ENCODE measurements at regions of chr19 and their contacts with region 1.

Region 1: GRCh38 chr19:42283143-42284065 is 14.4 kb downstream of the CIC start:
- DNase-seq: peak; percentile 93 to 97 (median 95)
- ATAC-seq: peak; percentile 83
- H3K4me3 ChIP-seq: peak overlapping the region; percentile 50
- H3K4me3 Mint-ChIP-seq: peak overlapping the region in 1 of 10 donors; percentile 0
- H3K27ac ChIP-seq: peak overlapping the region; percentile 83
- H3K27ac Mint-ChIP-seq: no peak overlapping the region
- H3K4me1 ChIP-seq: peaks cover 42 to 45% of the 10 kb centered on the region in 2 donors
- H3K4me1 Mint-ChIP-seq: peaks cover 22 to 44% (median 32%) of the 10 kb centered on the region in 7 donors
- H3K27me3 ChIP-seq: no peaks in the 10 kb centered on the region
- H3K27me3 Mint-ChIP-seq: no peaks in the 10 kb centered on the region

Region 2: DNA sequence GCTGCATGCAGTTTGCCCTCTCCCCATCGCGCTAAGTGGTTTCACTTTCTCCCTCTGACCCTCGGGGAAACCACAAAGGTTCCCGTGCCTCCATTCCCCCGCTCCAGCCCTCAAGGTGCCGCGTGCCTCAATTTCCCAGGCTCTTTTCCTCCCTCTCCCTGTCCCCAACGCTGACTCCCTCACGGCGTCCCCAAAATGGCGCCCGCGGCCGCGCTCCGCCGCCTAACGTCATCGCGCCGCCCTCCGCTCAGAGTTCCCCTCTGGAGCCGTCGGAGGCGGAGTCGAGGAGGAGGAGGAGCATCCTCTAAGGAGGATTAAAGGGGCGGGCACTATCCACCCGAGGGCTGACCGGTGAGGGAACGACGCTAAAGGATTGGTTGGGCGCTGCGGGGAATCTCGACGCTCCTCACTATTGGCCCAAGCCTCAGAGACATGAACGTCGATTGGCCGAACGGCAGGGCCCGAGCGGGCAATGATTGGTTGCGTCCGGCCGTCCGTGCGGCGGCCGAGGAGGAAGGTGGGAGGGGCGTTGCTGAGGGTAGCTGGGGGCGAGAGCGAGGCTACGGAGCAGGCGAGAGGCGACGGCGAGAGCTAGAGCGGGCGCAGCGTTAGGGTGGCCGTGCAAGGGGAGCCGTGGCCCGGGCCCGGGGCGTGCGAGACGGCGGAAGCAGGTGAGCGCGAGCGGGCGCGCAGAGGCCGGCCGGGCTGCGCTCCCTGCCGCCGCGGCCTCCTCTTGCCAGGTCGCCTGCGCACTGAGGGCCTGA is 207.6 kb before region 1 on chr19 and contains the start of gene ZNF574:
- CTCF ChIA-PET with region 1: no interaction called
- POLR2A ChIA-PET with region 1: no interaction called
- intact Hi-C with region 1: loop called in 1 of 2 experiments (anchors 2 kb)
- DNase-seq: peak; percentile 91 to 99 (median 98)
- ATAC-seq: peak; percentile 98
- H3K4me3 ChIP-seq: peak within 1 kb of the TSS; percentile 70
- H3K4me3 Mint-ChIP-seq: peak within 1 kb of the TSS; percentile 92 to 100 (median 98)
- H3K27ac ChIP-seq: peak within 1 kb of the TSS; percentile 97
- H3K27ac Mint-ChIP-seq: peak within 1 kb of the TSS; percentile 99 to 100 (median 100)
- H3K4me1 ChIP-seq: peaks cover 19 to 24% of the 10 kb centered on the region in 2 donors
- H3K4me1 Mint-ChIP-seq: peaks cover 26 to 44% (median 38%) of the 10 kb centered on the region in 7 donors
- H3K27me3 ChIP-seq: no peaks in the 10 kb centered on the region
- H3K27me3 Mint-ChIP-seq: peaks cover 0 to 13% (median 0%) of the 10 kb centered on the region in 5 donors
- total RNA-seq, gene ZNF574: 17.6 to 26.7 (median 20.9) TPM

Region 3: GRCh38 chr19:42185277-42185676 is 98.1 kb before region 1 on chr19:
- CTCF ChIA-PET with region 1: no interaction called
- POLR2A ChIA-PET with region 1: no interaction called
- intact Hi-C with region 1: no loop called
- DNase-seq: peak in 2 of 9 donors; percentile 34 to 39
- ATAC-seq: peak; percentile 82
- H3K4me3 ChIP-seq: no peak overlapping the region
- H3K4me3 Mint-ChIP-seq: peak overlapping the region; percentile 3 to 79 (median 50)
- H3K27ac ChIP-seq: no peak overlapping the region
- H3K27ac Mint-ChIP-seq: peak overlapping the region; percentile 0 to 74 (median 26)
- H3K4me1 ChIP-seq: peaks cover 25 to 29% of the 10 kb centered on the region in 2 donors
- H3K4me1 Mint-ChIP-seq: peaks cover 48 to 62% (median 55%) of the 10 kb centered on the region in 7 donors
- H3K27me3 ChIP-seq: no peaks in the 10 kb centered on the region
- H3K27me3 Mint-ChIP-seq: peaks cover 0 to 16% (median 0%) of the 10 kb centered on the region in 5 donors

Region 4: DNA sequence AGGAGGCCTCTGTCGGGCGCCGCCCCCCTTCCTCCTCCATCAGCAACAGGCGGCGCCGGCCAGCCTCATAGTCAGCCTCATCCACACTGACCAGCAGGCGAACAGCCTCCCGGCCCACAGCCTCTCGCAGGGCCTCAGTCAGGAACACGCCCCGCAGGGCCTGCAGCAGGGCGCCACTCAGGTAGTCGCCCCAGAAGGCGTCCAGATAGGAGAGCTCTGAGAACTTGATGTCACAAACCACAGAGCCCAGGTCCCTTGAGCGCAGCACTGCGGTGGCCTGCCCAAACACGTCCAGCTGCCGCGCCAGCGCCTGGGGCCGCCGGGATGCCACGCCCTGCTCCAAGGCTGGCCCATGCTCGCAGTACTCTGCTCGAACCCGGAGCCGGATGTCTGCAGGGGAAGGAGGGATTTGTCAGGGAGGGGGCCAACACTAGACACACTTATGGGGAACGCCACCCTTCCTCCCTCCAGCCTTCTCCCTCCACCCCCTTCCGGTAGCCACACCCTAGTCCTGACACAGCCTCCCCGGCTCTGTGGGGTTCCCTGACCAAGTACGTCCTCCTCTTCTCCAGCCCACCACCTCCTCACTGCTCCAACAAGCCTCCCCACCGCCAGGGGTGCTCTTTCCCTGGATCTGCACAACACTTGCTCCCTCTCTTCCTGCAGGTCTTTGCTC is 83.8 kb before region 1 on chr19:
- CTCF ChIA-PET with region 1: no interaction called
- POLR2A ChIA-PET with region 1: interaction called, 5 read pairs
- intact Hi-C with region 1: loop called (anchors 1 to 5 kb)
- DNase-seq: peak in 8 of 9 donors; percentile 40 to 69 (median 48)
- ATAC-seq: peak; percentile 49
- H3K4me3 ChIP-seq: peak overlapping the region; percentile 52
- H3K4me3 Mint-ChIP-seq: peak overlapping the region; percentile 78 to 97 (median 86)
- H3K27ac ChIP-seq: peak overlapping the region; percentile 82
- H3K27ac Mint-ChIP-seq: peak overlapping the region; percentile 84 to 96 (median 92)
- H3K4me1 ChIP-seq: peaks cover 71 to 75% of the 10 kb centered on the region in 2 donors
- H3K4me1 Mint-ChIP-seq: peaks cover 70 to 89% (median 80%) of the 10 kb centered on the region in 7 donors
- H3K27me3 ChIP-seq: no peaks in the 10 kb centered on the region
- H3K27me3 Mint-ChIP-seq: no peaks in the 10 kb centered on the region

Region 5: DNA sequence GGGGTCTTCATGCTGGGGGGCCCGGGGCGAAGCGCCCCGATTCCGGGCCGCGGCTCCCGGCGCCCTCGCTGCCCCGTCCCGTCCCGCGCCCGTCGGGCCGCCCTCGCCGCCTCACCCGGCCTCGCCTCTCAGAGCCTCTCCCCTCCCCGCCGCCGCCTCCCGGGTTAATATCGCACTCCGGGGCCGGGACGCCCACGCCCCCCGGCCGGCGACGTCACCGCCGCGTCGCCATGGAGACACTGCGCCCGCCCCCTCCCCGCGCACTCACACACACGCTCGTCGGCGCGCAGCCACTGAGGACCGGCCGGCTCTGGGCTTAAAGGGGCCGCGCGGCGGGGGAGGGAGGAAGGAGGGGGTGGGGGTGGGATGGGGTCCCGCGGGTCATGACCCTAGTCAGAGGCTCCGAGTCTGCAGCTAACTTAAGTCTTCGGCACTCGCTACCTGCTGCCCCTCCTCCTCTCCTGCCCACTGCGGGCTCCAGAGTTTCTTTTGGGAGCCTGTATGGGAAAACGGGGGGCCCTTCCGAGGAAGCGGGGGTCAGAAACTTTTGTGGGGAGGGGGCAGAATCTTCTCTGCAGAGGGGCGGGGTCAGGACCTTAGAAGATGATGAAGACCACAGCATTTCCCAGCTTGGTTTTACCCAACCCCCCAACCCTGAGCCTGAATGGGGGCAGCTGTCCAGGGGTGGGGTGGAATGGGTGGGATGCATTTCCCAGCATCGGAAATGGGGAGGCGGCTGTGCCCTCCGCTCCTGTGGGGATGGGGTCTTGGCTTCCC is 28.2 kb before region 1 on chr19 and contains the start of gene ERF:
- CTCF ChIA-PET with region 1: interaction called, 12 read pairs
- POLR2A ChIA-PET with region 1: interaction called, 9 read pairs
- intact Hi-C with region 1: loop called (anchors 1 kb)
- DNase-seq: peak; percentile 90 to 98 (median 94)
- ATAC-seq: peak; percentile 90
- H3K4me3 ChIP-seq: peak within 1 kb of the TSS; percentile 96
- H3K4me3 Mint-ChIP-seq: peak within 1 kb of the TSS; percentile 42 to 99 (median 77)
- H3K27ac ChIP-seq: peak within 1 kb of the TSS; percentile 99
- H3K27ac Mint-ChIP-seq: peak within 1 kb of the TSS in 8 of 9 donors; percentile 43 to 92 (median 82)
- H3K4me1 ChIP-seq: peaks cover 20 to 29% of the 10 kb centered on the region in 2 donors
- H3K4me1 Mint-ChIP-seq: peaks cover 20 to 37% (median 30%) of the 10 kb centered on the region in 7 donors
- H3K27me3 ChIP-seq: no peaks in the 10 kb centered on the region
- H3K27me3 Mint-ChIP-seq: peaks cover 0 to 10% (median 0%) of the 10 kb centered on the region in 5 donors
- total RNA-seq, gene ERF: 42.5 to 105 (median 51.8) TPM

Region 6: DNA sequence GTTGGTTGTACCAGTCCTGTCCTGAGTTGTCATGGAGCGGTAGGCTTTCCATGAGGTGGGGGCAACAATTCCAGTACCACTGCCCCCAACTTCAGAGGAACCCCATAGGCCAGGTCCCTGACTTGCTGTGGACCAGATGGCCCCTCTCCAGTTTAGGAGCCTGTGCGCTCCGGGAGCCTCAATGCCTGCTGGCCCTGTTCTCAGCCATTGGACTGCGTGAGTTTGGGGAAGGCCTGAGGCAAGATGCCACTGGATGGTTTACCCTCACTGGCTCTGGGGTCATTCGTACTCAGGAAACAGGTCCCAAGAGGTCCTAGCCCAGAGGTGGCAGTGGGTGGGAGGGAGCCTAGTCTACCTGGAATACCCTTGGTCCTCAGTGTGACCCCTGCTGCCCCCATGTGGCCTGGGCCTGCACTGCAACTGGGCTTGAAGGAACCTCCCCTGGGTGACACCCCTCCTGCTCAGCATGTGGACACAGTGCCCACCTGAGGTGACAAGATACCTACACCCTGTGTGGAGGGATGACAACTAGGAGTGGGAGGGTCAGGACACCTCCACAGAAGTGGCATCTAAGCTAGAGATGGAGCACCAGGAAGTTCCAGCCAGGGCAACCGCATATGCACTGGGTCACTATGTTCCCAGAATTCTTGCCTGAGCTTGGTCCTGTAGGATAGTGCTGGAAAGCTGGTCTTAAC is 12.6 kb after region 1 on chr19:
- CTCF ChIA-PET with region 1: interaction called, 8 read pairs
- POLR2A ChIA-PET with region 1: interaction called, 4 read pairs
- intact Hi-C with region 1: loop called (anchors 1 kb)
- DNase-seq: peak; percentile 76 to 94 (median 85)
- ATAC-seq: peak; percentile 96
- H3K4me3 ChIP-seq: no peak overlapping the region
- H3K4me3 Mint-ChIP-seq: no peak overlapping the region
- H3K27ac ChIP-seq: no peak overlapping the region
- H3K27ac Mint-ChIP-seq: peak overlapping the region in 6 of 9 donors; percentile 11 to 70 (median 42)
- H3K4me1 ChIP-seq: peaks cover 0 to 8% of the 10 kb centered on the region in 2 donors
- H3K4me1 Mint-ChIP-seq: peaks cover 8 to 18% (median 12%) of the 10 kb centered on the region in 7 donors
- H3K27me3 ChIP-seq: no peaks in the 10 kb centered on the region
- H3K27me3 Mint-ChIP-seq: no peaks in the 10 kb centered on the region

Region 7: DNA sequence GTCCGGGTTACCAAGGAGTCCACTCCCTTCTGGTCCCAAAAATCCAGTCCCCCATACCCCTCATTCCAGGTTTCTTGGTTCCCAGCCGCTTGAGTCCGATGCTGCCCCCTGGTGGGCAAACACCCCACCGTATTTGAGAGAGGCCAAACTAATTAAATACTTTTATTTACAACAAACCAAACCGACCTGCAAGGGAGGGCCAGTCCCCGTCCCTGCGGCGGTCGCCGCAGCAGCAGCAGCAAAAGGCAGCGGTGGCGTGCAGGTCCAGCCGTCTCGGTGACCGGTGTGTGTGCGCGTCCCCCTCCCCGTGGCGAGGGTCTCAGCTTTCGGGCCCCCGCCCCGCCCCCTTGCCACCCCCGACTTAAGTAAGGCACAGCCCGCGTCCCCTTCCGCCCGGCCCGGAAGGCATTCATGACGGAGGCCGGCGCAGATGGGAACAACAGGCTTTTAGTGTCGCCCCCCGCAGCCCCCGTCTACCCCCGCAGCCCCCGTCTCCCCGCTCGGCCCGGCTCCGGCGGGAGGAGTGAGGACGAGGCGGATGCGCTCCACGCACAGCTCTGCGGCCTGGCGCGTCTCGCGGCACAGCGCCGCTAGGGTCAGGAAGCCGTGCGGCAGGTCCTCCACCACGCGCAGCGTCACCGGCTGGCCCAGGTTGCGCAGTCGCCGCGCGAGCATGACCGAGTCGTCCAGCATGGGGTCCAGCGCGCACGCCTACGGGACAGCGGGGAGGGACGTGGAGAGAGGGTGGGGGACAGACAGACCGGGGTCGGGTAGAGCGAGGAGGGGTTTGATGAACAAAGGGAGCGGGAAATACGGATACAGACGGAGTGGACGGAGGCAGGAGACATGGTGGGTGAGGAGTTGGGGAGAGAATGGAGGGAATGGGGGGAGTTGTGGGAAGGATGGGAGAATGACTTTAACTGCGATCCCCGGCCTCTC is 118.2 kb after region 1 on chr19:
- CTCF ChIA-PET with region 1: interaction called, 4 read pairs
- POLR2A ChIA-PET with region 1: no interaction called
- intact Hi-C with region 1: loop called in 1 of 2 experiments (anchors 5 kb)
- DNase-seq: peak; percentile 46 to 72 (median 64)
- ATAC-seq: peak; percentile 78
- H3K4me3 ChIP-seq: peak overlapping the region; percentile 62
- H3K4me3 Mint-ChIP-seq: peak overlapping the region; percentile 79 to 88 (median 84)
- H3K27ac ChIP-seq: peak overlapping the region; percentile 68
- H3K27ac Mint-ChIP-seq: peak overlapping the region; percentile 49 to 88 (median 81)
- H3K4me1 ChIP-seq: peaks cover 12 to 13% of the 10 kb centered on the region in 2 donors
- H3K4me1 Mint-ChIP-seq: peaks cover 25 to 51% (median 42%) of the 10 kb centered on the region in 7 donors
- H3K27me3 ChIP-seq: no peaks in the 10 kb centered on the region
- H3K27me3 Mint-ChIP-seq: no peaks in the 10 kb centered on the region

Measured in naive thymus-derived CD4-positive, alpha-beta T cell (primary cell).